A549 (cell line): ENCODE measurements at regions of chr1 and their contacts with region 1.

Region 1: GRCh38 chr1:15158506-15159165 is 5.1 kb downstream of the TMEM51 start:
- DNase-seq: peak; percentile 35 to 68
- ATAC-seq: peak; percentile 63 to 67; a peak in 5 of 6 replicates
- H3K4me3 ChIP-seq: peak overlapping the region; percentile 23; the same call in 2 of the 3 replicates
- H3K27ac ChIP-seq: peak overlapping the region; percentile 79 to 99
- H3K4me1 ChIP-seq: peaks cover 67% of the 10 kb centered on the region
- CTCF ChIP-seq: no peak
- EP300 ChIP-seq: peak in 1 of 2 experiments; percentile 42; a peak in 2 of 5 replicates
- POLR2A ChIP-seq: no peak
- RAD21 ChIP-seq: peak in 1 of 2 experiments; percentile 17; a peak in 2 of 5 replicates

Region 2: GRCh38 chr1:15283526-15283925 is 124.9 kb after region 1 on chr1:
- CTCF ChIA-PET with region 1: no interaction called
- POLR2A ChIA-PET with region 1: interaction called, 12 read pairs
- DNase-seq: peak; percentile 66 to 69
- ATAC-seq: peak; percentile 89 to 92
- H3K4me3 ChIP-seq: no peak overlapping the region; the same call in 2 of the 3 replicates
- H3K27ac ChIP-seq: peak overlapping the region; percentile 68 to 83
- H3K4me1 ChIP-seq: peaks cover 37% of the 10 kb centered on the region
- CTCF ChIP-seq: no peak
- EP300 ChIP-seq: no peak
- POLR2A ChIP-seq: no peak
- RAD21 ChIP-seq: no peak